A673 (cell line): ENCODE measurements at regions of chr21 and their contacts with region 1.

Region 1: DNA sequence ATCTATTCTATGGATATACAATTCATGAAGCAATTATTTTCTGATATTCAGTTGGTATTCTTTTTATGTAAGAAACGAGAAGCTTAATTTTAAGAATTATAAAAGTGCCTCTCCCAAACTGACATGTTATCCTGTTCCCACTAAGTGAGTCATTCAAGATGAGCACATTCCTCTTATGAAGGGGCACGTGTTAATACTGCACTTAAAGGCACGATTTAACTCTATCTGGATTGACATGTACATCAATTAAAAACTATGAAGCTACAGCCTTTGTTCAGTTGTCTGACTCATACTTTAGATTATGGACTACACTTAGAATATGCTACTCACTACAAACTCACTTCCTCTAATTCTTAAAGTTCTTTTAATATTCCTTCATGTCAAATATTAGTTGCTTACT is 111.6 kb downstream of the CYYR1 start:
- DNase-seq: peak; percentile 54
- H3K4me3 ChIP-seq: no peak overlapping the region
- H3K27ac ChIP-seq: no peak overlapping the region
- H3K4me1 ChIP-seq: no peaks in the 10 kb centered on the region
- H3K27me3 ChIP-seq: no peaks in the 10 kb centered on the region
- CTCF ChIP-seq: no peak

Region 2: GRCh38 chr21:25938658-25939395 is 522.7 kb before region 1 on chr21:
- CTCF ChIA-PET with region 1: no interaction called
- POLR2A ChIA-PET with region 1: interaction called, 20 read pairs
- intact Hi-C with region 1: no loop called
- DNase-seq: peak; percentile 15
- H3K4me3 ChIP-seq: no peak overlapping the region
- H3K27ac ChIP-seq: peak overlapping the region; percentile 33
- H3K4me1 ChIP-seq: peaks cover 22% of the 10 kb centered on the region
- H3K27me3 ChIP-seq: no peaks in the 10 kb centered on the region
- CTCF ChIP-seq: no peak

Region 3: DNA sequence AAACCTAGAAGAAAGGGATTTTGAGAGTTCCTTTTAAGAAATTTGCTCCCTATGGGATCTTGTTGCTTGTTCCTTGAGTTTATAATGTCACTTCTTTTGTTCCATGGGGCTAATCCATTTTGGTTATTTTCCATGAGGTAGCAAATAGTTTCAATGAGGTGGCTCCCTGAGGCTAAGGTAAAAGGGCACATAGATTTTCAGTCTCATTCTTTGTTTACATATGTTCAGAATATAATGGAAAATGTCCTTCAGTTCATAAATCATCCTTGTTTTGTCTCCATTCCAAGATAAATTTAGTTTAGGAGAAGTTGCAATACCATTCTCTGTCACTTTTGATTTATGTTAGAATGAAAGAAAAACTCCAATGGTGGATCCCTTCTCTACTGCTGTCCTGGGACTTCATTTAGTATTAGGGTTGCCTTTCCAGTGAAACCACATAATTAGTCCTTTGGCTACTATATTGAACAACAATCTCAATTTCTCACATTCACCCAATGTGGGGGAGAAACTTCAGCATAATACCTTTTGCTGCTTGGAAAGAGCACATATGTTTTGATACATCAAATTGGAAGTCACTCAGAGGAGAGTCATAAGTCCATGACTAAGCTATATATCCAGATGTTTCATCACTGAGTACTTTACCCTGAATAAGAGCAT is 586.3 kb after region 1 on chr21:
- CTCF ChIA-PET with region 1: no interaction called
- POLR2A ChIA-PET with region 1: no interaction called
- intact Hi-C with region 1: no loop called
- DNase-seq: peak; percentile 44
- H3K4me3 ChIP-seq: no peak overlapping the region
- H3K27ac ChIP-seq: no peak overlapping the region
- H3K4me1 ChIP-seq: no peaks in the 10 kb centered on the region
- H3K27me3 ChIP-seq: peaks cover 3% of the 10 kb centered on the region
- CTCF ChIP-seq: no peak